Endothelial cell of umbilical vein (primary cell): ENCODE measurements at regions of chr12 and their contacts with region 1.

Region 1: GRCh38 chr12:89236748-89237388 is 115.4 kb downstream of the DUSP6 start:
- DNase-seq: no peak
- H3K4me3 ChIP-seq: no peak overlapping the region
- H3K27ac ChIP-seq: peak overlapping the region; percentile 39
- H3K4me1 ChIP-seq: peaks cover 44% of the 10 kb centered on the region
- H3K27me3 ChIP-seq: no peaks in the 10 kb centered on the region
- CTCF ChIP-seq: no peak
- POLR2A ChIP-seq: no peak

Region 2: GRCh38 chr12:89084751-89085150 is 152.1 kb before region 1 on chr12:
- CTCF ChIA-PET with region 1: no interaction called
- POLR2A ChIA-PET with region 1: no interaction called
- dilution Hi-C with region 1: no loop called
- intact Hi-C with region 1: loop called (anchors 5 kb)
- DNase-seq: peak; percentile 56
- H3K4me3 ChIP-seq: no peak overlapping the region
- H3K27ac ChIP-seq: peak overlapping the region; percentile 69
- H3K4me1 ChIP-seq: peaks cover 48% of the 10 kb centered on the region
- H3K27me3 ChIP-seq: no peaks in the 10 kb centered on the region
- CTCF ChIP-seq: no peak
- POLR2A ChIP-seq: no peak